Right ventricle myocardium inferior (tissue), 1 donor: ENCODE measurements at regions of chr10 and their contacts with region 1.

Region 1: DNA sequence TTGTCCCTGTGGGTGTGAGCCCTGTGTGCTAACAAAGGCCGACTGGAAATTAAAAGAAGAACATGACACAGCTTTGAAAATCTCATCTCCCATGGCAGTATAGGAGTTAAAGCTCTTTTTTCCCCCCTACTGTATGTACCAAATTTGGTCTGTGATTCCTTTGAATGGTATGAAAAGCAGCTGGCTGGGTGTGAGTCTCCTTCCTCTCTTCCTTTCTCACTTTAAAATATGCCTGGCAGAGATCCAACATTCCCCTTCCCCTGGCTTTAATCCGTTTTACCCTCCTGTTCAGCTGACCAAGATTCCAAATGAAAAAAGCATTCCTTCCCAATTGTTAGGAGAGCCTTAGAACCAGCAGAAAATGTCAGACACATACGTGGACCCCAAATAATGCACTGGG is 225.0 kb upstream of the CELF2 start:
- DNase-seq: no peak
- ATAC-seq: no peak

Region 2: GRCh38 chr10:10642751-10643150 is 149.9 kb before region 1 on chr10:
- intact Hi-C with region 1: loop called (anchors 10 kb)
- DNase-seq: peak; percentile 86
- ATAC-seq: peak; percentile 94

Region 3: GRCh38 chr10:10855151-10855581 is 62.5 kb after region 1 on chr10:
- intact Hi-C with region 1: no loop called
- DNase-seq: no peak
- ATAC-seq: peak; percentile 39

Region 4: DNA sequence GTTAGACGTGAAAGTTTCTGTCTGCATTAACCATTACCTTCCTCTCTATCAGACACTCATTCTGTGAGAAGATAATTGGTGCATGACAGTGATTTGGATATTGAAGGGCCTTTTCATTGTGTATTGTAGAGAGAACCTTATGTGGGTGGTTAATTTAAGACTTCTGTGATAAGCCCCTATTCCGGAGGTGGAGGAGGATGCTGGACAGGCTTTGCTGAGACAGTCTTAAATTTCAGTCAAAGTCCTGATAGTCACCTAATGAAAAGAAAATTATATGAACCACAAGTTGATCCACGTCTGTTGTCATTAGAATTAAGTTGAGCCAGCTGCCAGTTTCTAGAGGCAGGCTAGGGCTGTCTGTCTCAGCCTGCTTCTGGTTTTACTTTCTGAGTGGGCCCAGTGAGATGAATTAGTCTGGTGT is 287.9 kb after region 1 on chr10:
- intact Hi-C with region 1: no loop called
- DNase-seq: no peak
- ATAC-seq: no peak